Gastrocnemius medialis (tissue), 4 donors: ENCODE measurements at regions of chr1 and their contacts with region 1.

Region 1: GRCh38 chr1:57831624-57832023 is 407.8 kb upstream of the DAB1 start:
- DNase-seq: no peak
- ATAC-seq: no peak
- H3K4me3 ChIP-seq: no peak overlapping the region
- H3K27ac ChIP-seq: no peak overlapping the region
- H3K4me1 ChIP-seq: no peaks in the 10 kb centered on the region
- H3K27me3 ChIP-seq: no peaks in the 10 kb centered on the region
- CTCF ChIP-seq: no peak
- POLR2A ChIP-seq: no peak

Region 2: GRCh38 chr1:57857809-57858208 is 26.2 kb after region 1 on chr1:
- in situ Hi-C with region 1: no loop called
- intact Hi-C with region 1: loop called (anchors 1 kb)
- DNase-seq: no peak
- ATAC-seq: no peak
- H3K4me3 ChIP-seq: no peak overlapping the region
- H3K27ac ChIP-seq: no peak overlapping the region
- H3K4me1 ChIP-seq: no peaks in the 10 kb centered on the region
- H3K27me3 ChIP-seq: no peaks in the 10 kb centered on the region
- CTCF ChIP-seq: no peak
- POLR2A ChIP-seq: no peak